Activated T-helper 1 cell treated with anti-CD3 and anti-CD28 coated beads, Interleukin-12 subunit alpha, Interleukin-12 subunit beta, Interleukin-2, Interleukin-4 antibody, amounts not matched to agents 30 ng/mL and 10 ng/mL and 1 ng/mL, durations not matched to agents 14 hours and 24 hours and 36 hours (primary cell): ENCODE measurements at regions of chr12 and their contacts with region 1.

Region 1: DNA sequence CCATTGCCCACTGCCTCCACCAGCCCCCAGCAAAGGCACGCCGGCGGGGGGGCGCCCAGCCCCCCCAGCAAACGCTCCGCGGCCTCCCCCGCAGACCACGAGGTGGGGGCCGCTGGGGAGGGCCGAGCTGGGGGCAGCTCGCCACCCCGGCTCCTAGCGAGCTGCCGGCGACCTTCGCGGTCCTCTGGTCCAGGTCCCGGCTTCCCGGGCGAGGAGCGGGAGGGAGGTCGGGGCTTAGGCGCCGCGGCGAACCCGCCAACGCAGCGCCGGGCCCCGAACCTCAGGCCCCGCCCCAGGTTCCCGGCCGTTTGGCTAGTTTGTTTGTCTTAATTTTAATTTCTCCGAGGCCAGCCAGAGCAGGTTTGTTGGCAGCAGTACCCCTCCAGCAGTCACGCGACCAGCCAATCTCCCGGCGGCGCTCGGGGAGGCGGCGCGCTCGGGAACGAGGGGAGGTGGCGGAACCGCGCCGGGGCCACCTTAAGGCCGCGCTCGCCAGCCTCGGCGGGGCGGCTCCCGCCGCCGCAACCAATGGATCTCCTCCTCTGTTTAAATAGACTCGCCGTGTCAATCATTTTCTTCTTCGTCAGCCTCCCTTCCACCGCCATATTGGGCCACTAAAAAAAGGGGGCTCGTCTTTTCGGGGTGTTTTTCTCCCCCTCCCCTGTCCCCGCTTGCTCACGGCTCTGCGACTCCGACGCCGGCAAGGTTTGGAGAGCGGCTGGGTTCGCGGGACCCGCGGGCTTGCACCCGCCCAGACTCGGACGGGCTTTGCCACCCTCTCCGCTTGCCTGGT is at the start of gene CDKN1B:
- DNase-seq: peak; percentile 77
- H3K4me3 Mint-ChIP-seq: peak within 1 kb of the TSS; percentile 98
- H3K27ac Mint-ChIP-seq: peak within 1 kb of the TSS; percentile 99
- H3K4me1 Mint-ChIP-seq: peaks cover 71% of the 10 kb centered on the region
- H3K27me3 Mint-ChIP-seq: no peaks in the 10 kb centered on the region
- total RNA-seq, gene CDKN1B: 54.8 and 61.9 TPM in 2 replicates

Region 2: DNA sequence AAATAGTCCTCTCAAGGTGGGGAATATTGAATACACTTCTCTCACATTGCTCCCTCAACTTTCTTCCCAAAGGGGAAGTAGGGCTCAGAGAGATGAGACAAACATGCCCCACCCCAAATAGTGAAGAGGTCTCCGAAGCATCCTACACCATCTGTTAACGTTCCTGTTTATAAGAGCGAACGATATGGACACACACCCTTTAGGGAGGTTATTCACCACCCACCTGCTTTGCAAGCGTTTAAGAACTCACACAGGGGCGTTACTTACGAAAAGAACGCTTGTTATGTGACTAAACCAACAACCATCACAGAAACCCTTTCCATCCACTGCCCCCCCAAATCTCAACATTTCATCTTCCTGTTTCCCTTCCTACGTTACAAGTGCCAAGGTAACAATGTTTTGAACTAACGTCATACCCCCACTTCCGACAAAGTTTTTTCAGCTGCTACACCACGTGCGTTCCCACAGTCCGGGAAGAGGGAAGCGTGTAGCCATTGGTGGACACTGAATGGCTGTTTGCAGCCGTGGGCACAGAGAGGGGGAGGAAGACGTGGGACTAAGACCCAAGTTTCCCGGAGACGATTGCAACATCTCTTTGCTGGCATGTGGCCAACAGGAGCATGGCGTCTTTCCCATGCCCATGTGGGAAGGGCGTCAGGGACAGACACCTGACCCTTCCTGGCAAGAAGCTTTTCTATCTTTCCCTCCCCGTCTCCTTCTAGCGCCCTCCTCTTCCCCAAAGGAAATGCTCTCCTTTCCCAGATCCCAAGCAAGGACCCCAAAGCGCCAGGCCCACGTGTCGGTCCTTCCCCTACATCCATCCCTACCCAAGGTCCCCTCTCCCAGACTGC is 1995.1 kb before region 1 on chr12:
- intact Hi-C with region 1: loop called (anchors 10 kb)
- DNase-seq: peak; percentile 53
- H3K4me3 Mint-ChIP-seq: peak overlapping the region; percentile 96
- H3K27ac Mint-ChIP-seq: peak overlapping the region; percentile 96
- H3K4me1 Mint-ChIP-seq: peaks cover 60% of the 10 kb centered on the region
- H3K27me3 Mint-ChIP-seq: peaks cover 34% of the 10 kb centered on the region

Region 3: GRCh38 chr12:12376646-12377448 is 340.1 kb before region 1 on chr12:
- intact Hi-C with region 1: loop called (anchors 2 kb)
- DNase-seq: peak; percentile 12
- H3K4me3 Mint-ChIP-seq: no peak overlapping the region
- H3K27ac Mint-ChIP-seq: peak overlapping the region; percentile 41
- H3K4me1 Mint-ChIP-seq: peaks cover 39% of the 10 kb centered on the region
- H3K27me3 Mint-ChIP-seq: no peaks in the 10 kb centered on the region

Region 4: GRCh38 chr12:12611512-12612306 is 105.3 kb before region 1 on chr12 and contains the start of gene CREBL2:
- intact Hi-C with region 1: loop called (anchors 2 kb)
- DNase-seq: peak; percentile 78
- H3K4me3 Mint-ChIP-seq: peak within 1 kb of the TSS; percentile 95
- H3K27ac Mint-ChIP-seq: peak within 1 kb of the TSS; percentile 96
- H3K4me1 Mint-ChIP-seq: peaks cover 47% of the 10 kb centered on the region
- H3K27me3 Mint-ChIP-seq: no peaks in the 10 kb centered on the region
- total RNA-seq, gene CREBL2: 16.7 and 17.9 TPM in 2 replicates

Region 5: GRCh38 chr12:12696562-12697383 is 20.2 kb before region 1 on chr12:
- intact Hi-C with region 1: loop called (anchors 1 kb)
- DNase-seq: peak; percentile 91
- H3K4me3 Mint-ChIP-seq: peak overlapping the region; percentile 96
- H3K27ac Mint-ChIP-seq: peak overlapping the region; percentile 89
- H3K4me1 Mint-ChIP-seq: peaks cover 49% of the 10 kb centered on the region
- H3K27me3 Mint-ChIP-seq: no peaks in the 10 kb centered on the region

Region 6: DNA sequence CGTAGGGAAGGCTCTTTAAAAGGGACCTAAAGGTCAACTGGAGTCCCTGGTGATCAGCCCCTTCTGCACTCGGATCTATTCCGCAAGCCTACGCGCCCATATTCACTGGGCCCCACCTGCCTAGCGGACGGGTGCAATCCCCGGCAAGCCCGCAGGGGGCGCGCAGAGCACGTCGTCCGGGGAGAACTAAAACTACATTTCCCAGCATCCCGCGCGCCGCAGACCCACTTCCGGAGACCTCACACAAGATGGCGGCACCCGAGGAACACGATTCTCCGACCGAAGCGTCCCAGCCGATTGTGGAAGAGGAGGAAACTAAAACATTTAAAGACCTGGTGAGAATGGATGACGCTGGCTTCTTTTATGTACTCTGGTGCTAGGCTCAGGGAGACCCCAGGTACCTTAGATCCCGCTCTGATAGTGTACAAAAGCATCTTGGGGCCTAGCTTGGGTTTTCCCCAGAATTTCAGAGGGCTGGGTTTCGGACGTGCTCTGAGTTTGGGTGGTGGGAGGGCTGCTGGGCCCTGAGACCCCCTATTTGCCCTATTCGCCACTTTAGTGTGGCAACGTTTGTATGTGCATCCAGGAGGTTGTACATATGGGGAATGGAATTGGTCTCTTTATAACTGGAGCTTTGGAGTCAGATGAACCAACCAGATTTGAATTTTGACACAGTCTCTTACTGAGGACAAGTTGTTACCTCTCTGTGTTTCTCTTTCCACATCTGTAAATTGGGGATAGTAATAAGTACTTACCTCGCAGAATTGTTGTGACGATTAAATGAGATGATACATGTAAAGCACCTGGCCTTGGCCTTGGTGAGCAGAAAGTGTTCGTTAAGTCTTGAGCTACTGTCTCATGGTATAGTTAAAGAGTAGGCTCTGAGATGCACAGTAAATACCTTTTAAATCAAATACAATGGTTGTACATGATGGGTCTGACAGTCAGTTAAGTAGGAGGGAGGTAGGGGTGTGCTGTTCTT is 96.4 kb after region 1 on chr12 and contains the start of gene DDX47:
- intact Hi-C with region 1: loop called (anchors 5 kb)
- DNase-seq: peak; percentile 94
- H3K4me3 Mint-ChIP-seq: peak within 1 kb of the TSS; percentile 85
- H3K27ac Mint-ChIP-seq: peak within 1 kb of the TSS; percentile 81
- H3K4me1 Mint-ChIP-seq: peaks cover 52% of the 10 kb centered on the region
- H3K27me3 Mint-ChIP-seq: no peaks in the 10 kb centered on the region
- total RNA-seq, gene DDX47: 120 and 127 TPM in 2 replicates

Region 7: DNA sequence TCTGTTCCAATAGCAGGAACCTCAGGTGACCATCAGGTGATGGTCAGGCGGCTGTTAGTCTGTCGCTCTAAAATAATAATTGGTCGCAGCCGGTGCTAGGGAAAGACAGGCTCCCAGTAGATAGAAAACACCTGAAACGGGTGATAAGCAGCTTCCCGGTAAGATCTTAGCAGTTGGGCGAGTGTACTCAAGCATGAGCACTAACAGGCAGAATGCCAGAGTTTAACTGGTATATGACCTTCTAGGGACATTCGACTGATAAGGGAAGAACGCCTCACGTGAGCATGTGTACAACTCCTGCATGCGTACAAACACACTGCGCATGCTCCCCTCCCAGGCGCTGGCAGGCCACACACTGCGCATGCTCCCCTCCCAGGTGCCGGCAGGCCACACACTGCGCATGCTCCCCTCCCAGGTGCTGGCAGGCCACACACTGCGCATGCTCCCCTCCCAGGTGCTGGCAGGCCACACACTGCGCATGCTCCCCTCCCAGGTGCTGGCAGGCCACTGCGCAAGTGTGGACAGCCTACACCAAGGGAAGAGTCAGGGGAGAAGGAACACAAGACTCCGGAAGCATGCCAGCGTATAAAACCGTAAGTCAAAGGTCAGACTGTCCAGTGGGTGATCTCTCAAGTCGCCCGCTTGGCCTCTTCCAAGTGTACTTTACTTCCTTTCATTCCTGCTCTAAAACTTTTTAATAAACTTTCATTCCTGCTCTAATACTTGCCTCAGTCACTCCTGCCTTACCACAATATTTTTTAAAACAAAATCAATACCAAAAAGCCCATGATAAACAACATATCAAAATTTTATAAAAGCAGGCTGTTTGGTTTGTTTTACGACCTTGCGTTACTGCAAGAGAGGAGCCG is 210.5 kb after region 1 on chr12:
- intact Hi-C with region 1: no loop called
- DNase-seq: peak; percentile 9
- H3K4me3 Mint-ChIP-seq: peak overlapping the region; percentile 56
- H3K27ac Mint-ChIP-seq: no peak overlapping the region
- H3K4me1 Mint-ChIP-seq: no peaks in the 10 kb centered on the region
- H3K27me3 Mint-ChIP-seq: peaks cover 4% of the 10 kb centered on the region

Region 8: GRCh38 chr12:14605401-14605989 is 1888.5 kb after region 1 on chr12:
- intact Hi-C with region 1: no loop called
- DNase-seq: no peak
- H3K4me3 Mint-ChIP-seq: no peak overlapping the region
- H3K27ac Mint-ChIP-seq: no peak overlapping the region
- H3K4me1 Mint-ChIP-seq: no peaks in the 10 kb centered on the region
- H3K27me3 Mint-ChIP-seq: peaks cover 3% of the 10 kb centered on the region